ENCODE measurements at regions of chr10 and their contacts with region 1.

Region 1: DNA sequence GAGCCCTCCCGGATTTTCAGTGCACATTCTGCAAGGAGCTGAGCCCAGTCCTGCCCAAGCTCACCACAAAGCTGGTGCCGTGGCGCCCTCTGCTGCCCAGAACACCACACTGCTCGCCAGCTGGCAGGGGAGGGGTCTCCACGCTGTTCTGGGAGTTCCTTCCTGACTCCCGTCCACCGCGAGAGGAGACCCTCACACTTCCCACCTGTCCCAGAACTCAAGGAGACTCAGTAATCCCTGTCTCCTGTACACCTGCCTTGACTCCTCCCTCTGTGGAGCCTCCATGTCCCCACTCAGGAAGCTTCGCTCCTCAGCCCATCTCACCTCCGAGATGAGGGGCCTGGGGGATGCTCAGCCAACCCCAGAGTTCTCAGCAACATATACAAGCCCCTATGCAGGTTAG is 11.3 kb downstream of the C10orf105 start:
- DNase-seq: peak; percentile 78
- H3K4me3 Mint-ChIP-seq: no peak overlapping the region
- H3K27ac Mint-ChIP-seq: peak overlapping the region; percentile 67
- H3K4me1 Mint-ChIP-seq: peaks cover 46% of the 10 kb centered on the region
- H3K27me3 Mint-ChIP-seq: peaks cover 7% of the 10 kb centered on the region

Region 2: DNA sequence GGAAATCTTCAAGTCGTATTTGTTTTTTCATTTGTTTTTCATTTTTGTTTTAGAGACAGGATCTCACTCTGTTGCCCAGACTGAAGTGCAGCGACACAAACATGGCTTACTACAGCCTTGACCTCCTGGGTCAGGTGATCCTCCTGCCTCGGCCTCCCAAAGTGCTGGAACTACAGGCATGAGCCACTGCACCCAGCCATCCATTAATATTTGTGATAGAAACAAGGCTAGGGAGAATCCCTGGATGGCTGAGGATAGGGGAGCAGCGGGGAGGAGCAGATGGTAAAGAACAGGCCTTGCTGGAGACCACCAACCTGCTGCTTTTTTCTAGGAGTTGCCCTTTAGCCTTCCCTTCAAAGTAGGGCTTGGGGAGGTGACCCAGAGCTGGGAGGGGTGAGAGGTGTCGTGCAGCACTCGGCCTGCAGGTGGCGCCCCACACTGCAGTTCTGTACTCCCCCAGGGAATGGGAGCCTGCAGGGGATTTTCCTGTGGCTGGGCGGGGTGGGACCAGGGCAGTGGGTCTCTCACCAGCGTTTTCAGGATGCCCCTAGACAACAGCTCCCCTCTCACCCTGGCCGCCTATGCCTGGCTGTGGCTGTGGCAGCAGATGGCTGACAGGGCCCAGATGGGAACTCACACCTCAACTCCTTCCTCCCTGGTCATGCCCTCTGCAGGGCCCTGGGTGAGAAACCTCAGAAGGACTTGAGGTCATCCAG is 324.2 kb before region 1 on chr10:
- CTCF ChIA-PET with region 1: interaction called, 12 read pairs
- DNase-seq: peak; percentile 81
- H3K4me3 Mint-ChIP-seq: no peak overlapping the region
- H3K27ac Mint-ChIP-seq: no peak overlapping the region
- H3K4me1 Mint-ChIP-seq: no peaks in the 10 kb centered on the region
- H3K27me3 Mint-ChIP-seq: peaks cover 21% of the 10 kb centered on the region

Region 3: DNA sequence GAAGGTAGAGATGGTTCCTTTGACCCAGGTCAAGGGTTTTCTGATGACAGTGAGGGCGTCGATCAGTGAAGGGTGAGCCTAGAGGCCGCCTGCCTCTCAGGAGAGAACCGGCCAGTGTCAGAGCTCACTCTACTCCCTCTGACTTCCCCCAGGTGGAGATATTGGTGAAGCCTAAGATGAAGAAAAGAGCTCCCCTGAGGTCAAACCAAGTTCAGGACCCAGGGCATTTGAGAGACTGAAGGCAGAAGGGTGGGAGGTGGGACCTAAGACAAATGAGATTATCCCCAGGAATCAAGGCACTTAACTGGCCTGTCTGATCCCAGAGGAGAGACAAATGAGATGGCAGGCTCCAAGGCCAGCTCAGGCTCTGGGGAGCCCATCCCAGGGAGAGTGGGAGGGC is 206.9 kb before region 1 on chr10:
- CTCF ChIA-PET with region 1: no interaction called
- DNase-seq: no peak
- H3K4me3 Mint-ChIP-seq: no peak overlapping the region
- H3K27ac Mint-ChIP-seq: no peak overlapping the region
- H3K4me1 Mint-ChIP-seq: peaks cover 5% of the 10 kb centered on the region
- H3K27me3 Mint-ChIP-seq: peaks cover 17% of the 10 kb centered on the region

Region 4: DNA sequence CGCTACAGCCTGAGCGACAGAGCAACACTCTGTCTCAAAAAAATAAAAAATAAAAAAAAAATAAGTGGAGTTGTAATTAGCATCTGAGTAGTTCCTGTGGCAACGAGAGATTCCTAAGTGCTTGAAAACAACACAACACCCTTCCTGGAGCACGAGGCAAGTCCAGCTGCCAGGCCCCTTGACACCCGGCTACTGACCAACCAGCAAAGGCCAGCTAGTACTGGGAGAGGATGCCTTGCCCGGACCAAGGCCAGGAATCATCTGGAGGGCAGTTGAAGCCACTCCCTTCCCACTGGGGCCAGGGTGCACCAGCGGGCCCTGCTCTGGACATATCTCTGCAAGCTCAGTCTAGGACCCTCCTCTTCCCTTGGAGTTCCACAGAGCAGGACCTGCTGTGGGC is 10.7 kb after region 1 on chr10:
- CTCF ChIA-PET with region 1: interaction called, 31 read pairs
- DNase-seq: no peak
- H3K4me3 Mint-ChIP-seq: no peak overlapping the region
- H3K27ac Mint-ChIP-seq: no peak overlapping the region
- H3K4me1 Mint-ChIP-seq: peaks cover 44% of the 10 kb centered on the region
- H3K27me3 Mint-ChIP-seq: peaks cover 11% of the 10 kb centered on the region

Region 5: DNA sequence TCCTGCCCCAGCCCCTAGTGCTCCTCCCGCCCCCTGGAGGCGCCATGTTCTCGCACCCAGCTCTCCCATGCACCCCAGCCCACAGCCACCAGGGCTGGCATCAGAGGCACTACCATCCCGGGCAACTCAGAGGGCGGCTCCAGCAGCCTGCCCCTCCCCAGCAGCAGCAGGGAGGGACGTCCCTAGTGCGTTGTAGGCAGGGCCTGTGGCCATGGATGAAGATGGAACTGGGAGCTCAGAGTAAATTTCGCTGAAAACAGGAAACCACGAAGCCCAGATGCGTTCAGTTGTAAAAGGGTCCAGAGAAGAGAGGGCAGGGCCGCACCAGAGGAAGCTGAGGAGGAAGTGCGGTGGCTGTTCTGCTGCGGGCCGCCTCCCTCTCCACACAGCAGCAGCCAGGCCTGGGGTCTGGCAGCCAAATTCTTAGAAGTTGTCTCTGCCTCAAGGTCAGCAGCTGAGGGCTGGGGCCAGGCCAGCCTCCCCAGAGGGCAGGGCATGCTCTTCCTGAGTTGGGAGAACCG is 40.4 kb after region 1 on chr10:
- CTCF ChIA-PET with region 1: interaction called, 12 read pairs
- DNase-seq: peak; percentile 93
- H3K4me3 Mint-ChIP-seq: peak overlapping the region; percentile 49
- H3K27ac Mint-ChIP-seq: peak overlapping the region; percentile 96
- H3K4me1 Mint-ChIP-seq: peaks cover 98% of the 10 kb centered on the region
- H3K27me3 Mint-ChIP-seq: no peaks in the 10 kb centered on the region

Region 6: DNA sequence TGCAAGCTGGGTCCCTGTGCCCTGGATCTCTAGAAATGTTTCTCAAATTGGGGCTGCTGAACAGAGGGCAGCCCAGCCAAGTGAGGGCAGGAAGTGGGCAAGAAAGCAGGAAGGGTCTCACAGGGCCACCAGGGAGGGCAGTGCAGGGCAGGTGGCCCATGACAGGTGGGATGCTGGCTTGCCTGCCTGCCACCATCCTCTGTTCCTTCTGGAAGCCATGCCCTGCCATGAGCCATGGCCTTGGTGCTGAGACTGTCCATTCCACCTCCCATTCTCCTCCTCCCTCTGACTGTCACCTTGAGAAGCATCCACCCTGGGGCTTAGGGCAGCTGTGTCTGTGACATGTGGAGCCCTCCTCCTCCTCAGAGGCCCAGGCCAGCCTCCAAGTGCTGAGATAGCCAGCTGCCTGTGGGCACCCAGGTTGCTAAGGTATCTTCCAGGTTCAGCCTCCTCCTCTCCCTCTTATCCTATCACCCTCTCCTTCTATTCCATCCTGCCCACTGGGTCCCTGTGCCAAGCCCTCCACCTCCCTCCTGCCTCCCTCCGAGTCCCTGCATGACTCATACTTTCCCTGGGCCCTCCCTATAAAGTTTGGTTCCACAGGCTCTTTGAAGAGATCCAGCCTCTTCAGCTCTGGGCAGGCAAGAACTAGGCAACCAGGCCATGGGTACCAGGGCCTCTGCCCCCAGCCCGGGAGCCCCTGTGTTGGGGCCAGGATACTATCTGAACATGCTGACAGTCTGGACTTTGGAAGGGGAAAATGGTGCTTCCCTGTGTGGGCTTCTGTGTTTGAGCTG is 63.7 kb after region 1 on chr10:
- CTCF ChIA-PET with region 1: interaction called, 38 read pairs
- DNase-seq: peak; percentile 57
- H3K4me3 Mint-ChIP-seq: peak overlapping the region; percentile 93
- H3K27ac Mint-ChIP-seq: peak overlapping the region; percentile 92
- H3K4me1 Mint-ChIP-seq: peaks cover 83% of the 10 kb centered on the region
- H3K27me3 Mint-ChIP-seq: no peaks in the 10 kb centered on the region

Measured in activated naive CD4-positive, alpha-beta T cell treated with anti-CD3 and anti-CD28 coated beads, Interleukin-2, amount 10 ng/mL, durations not matched to agents 7 days and 5 days (primary cell).